Kidney (tissue), 22 donors: ENCODE measurements at regions of chr17 and their contacts with region 1.

Region 1: DNA sequence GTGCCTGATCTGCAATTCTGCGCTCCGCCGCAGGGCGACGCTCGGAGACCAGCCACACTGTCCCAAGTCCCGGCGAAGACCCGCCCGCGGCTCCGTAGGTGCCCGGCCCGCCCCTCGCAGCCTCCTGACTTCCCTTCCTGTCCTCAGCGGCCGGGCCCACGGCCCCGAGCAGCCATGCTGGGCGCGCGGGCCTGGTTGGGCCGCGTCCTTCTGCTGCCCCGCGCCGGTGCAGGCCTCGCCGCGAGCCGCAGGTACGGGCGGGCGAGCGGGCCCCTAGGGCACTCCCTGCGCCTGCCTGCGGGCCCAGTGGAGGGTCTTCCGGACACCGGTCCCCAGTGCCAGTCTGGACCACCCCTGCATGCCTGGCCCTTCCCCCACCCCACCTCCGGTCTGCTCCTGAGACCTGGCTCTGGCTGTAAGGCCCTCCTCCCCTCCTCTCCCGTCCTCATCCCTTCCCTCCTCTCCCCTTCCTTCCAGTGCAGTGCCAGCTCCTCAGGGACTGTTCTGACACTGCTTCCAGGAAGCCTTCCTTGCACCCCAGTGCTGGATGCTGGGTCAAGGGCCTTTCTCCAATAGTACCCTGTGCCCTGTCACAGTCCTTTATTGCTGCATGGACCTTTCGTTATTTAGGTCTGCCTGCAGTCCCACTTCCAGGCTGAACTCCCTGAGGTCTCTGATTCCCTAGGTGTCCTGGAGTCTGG is at the start of gene SPATA20:
- DNase-seq: peak; percentile 93 to 97 (median 95)
- H3K4me3 ChIP-seq: peak within 1 kb of the TSS; percentile 46 to 61 (median 61)
- H3K27ac ChIP-seq: peak within 1 kb of the TSS; percentile 71 to 74
- H3K4me1 ChIP-seq: peaks cover 0 to 21% (median 9%) of the 10 kb centered on the region in 3 donors
- H3K27me3 ChIP-seq: no peaks in the 10 kb centered on the region
- CTCF ChIP-seq: peak; percentile 99
- total RNA-seq, gene SPATA20: 60.4 TPM

Region 2: GRCh38 chr17:50626037-50626574 is 78.9 kb after region 1 on chr17:
- intact Hi-C with region 1: loop called (anchors 5 kb)
- DNase-seq: peak; percentile 80 to 88 (median 86)
- H3K4me3 ChIP-seq: no peak overlapping the region
- H3K27ac ChIP-seq: no peak overlapping the region
- H3K4me1 ChIP-seq: peaks cover 0 to 11% (median 3%) of the 10 kb centered on the region in 3 donors
- H3K27me3 ChIP-seq: no peaks in the 10 kb centered on the region
- CTCF ChIP-seq: peak; percentile 75

Region 3: GRCh38 chr17:50672831-50673601 is 125.8 kb after region 1 on chr17:
- intact Hi-C with region 1: loop called (anchors 10 kb)
- DNase-seq: peak in 2 of 5 donors; percentile 30 to 56
- H3K4me3 ChIP-seq: no peak overlapping the region
- H3K27ac ChIP-seq: no peak overlapping the region
- H3K4me1 ChIP-seq: no peaks in the 10 kb centered on the region
- H3K27me3 ChIP-seq: no peaks in the 10 kb centered on the region
- CTCF ChIP-seq: no peak

Region 4: DNA sequence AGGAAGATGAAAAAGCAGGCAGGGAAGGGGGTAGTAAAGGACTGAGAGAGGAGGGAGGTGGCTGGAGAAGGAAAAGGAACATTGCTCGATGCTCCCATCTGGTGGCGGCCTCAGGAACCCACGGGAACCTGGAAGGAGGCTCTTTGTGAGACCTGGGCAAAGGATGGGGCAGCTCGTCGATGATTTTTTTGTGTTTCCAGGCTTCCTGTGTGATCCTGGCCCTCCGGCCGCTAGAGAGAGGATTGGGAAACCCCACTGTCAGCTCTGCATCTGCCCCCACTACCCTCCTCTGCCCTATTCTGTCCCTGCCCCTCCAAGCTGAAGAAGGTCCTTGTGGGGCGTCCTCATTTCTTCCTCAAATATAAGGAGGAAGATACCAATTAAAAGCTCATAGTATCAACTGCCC is 294.8 kb after region 1 on chr17:
- intact Hi-C with region 1: loop called (anchors 10 kb)
- DNase-seq: peak in 4 of 5 donors; percentile 82 to 87 (median 84)
- H3K4me3 ChIP-seq: no peak overlapping the region
- H3K27ac ChIP-seq: no peak overlapping the region
- H3K4me1 ChIP-seq: no peaks in the 10 kb centered on the region
- H3K27me3 ChIP-seq: no peaks in the 10 kb centered on the region
- CTCF ChIP-seq: peak; percentile 80

Region 5: DNA sequence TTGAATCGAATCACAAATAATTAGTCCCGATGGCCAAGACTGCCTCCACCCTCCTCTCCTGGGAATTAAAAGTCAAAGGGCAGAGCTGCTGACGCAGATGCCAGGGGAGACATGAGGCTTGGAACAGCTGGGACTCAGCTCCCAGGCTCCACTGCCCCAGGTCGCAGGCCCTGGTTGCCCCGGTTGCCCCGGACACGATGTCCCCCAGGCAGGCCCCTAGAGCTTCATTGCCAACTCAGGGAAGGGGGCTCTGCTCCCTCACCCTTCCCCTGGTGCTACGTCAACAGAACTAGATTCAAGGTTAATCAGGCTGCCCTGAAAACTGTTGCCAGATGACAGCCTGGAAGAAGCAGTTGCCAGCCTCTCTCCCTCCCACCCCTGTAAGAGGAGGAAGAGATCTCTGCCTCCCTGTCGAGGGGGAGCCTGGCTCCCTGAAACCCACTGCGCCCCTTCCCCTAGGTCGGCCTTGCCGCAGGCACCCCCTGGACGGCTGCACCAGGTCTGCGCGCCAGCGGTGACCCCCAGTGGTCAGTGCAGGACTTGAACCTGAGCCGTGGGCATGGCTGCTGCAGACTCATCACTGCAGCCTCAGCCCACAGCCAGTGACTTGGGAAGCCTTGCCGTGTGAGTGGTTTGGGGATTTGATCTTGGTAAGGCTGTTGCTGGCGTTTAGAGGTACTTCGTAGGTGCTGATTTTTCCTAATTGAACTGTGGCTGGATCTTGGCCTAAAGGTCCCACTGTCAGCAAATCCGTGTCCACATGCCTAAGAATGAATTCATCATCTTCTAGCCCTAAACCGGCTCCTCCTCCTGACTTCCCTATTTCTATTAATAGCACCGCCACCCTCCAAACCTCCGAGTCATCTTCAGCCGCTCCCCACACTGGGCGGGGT is 403.1 kb after region 1 on chr17:
- intact Hi-C with region 1: loop called (anchors 10 kb)
- DNase-seq: peak; percentile 60 to 91 (median 70)
- H3K4me3 ChIP-seq: peak overlapping the region in 1 of 3 donors; percentile 7
- H3K27ac ChIP-seq: peak overlapping the region; percentile 91 to 95
- H3K4me1 ChIP-seq: peaks cover 2 to 46% (median 42%) of the 10 kb centered on the region in 3 donors
- H3K27me3 ChIP-seq: no peaks in the 10 kb centered on the region
- CTCF ChIP-seq: peak; percentile 84